ENCODE measurements at regions of chr7 and their contacts with region 1.

Region 1: GRCh38 chr7:149261829-149262617 is at the start of gene ZNF783:
- DNase-seq: peak; percentile 71 to 84
- ATAC-seq: peak; percentile 92 to 94
- H3K4me3 ChIP-seq: peak within 1 kb of the TSS; percentile 59 to 83 (median 62)
- H3K27ac ChIP-seq: peak within 1 kb of the TSS; percentile 76 to 92 (median 85)
- H3K4me1 ChIP-seq: peaks cover 12 to 18% of the 10 kb centered on the region in 2 donors
- H3K27me3 ChIP-seq: no peaks in the 10 kb centered on the region
- CTCF ChIP-seq: peak; percentile 73 to 96 (median 94)
- POLR2A ChIP-seq: peak; percentile 64 to 66
- total RNA-seq, gene ZNF783: 3.4 to 7.1 (median 5.5) TPM

Region 2: DNA sequence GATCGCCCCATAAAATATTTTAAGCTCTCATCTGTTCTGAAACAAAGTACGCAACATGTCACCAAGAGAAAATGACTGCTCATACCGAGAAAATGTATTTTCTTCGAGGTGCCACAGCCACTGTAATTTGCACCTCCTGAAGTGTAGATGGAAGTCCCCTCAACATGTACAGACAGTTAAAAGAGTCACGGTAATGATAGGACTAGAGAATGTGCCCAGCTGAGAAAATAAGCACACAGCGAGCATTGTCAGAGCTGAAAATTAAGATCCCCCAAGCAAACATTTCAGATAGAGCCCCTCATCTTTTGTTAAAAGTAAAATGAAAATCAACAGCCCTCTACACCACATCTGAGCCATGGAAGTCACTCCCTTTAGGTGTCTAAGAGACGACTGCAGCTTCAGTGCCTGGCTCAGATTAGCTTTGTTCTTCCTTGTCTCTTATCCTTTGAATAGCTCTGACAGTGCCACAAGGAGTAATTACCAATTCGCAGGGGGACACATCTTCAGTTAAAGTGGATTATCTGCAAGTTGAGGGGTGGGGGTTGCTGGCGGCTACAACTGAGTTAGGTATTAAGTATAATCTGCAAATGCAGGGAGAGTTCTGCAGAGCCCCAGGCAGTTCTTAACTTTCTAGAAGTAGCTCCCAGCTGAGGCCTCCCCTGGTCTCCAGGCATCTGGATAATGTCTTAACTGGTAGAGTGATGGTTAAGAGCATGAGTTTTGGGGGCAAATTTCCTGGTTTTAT is 894.1 kb before region 1 on chr7:
- in situ Hi-C with region 1: no loop called
- intact Hi-C with region 1: no loop called
- DNase-seq: no peak
- ATAC-seq: no peak
- H3K4me3 ChIP-seq: no peak overlapping the region
- H3K27ac ChIP-seq: no peak overlapping the region
- H3K4me1 ChIP-seq: no peaks in the 10 kb centered on the region
- H3K27me3 ChIP-seq: no peaks in the 10 kb centered on the region
- CTCF ChIP-seq: no peak
- POLR2A ChIP-seq: no peak

Region 3: DNA sequence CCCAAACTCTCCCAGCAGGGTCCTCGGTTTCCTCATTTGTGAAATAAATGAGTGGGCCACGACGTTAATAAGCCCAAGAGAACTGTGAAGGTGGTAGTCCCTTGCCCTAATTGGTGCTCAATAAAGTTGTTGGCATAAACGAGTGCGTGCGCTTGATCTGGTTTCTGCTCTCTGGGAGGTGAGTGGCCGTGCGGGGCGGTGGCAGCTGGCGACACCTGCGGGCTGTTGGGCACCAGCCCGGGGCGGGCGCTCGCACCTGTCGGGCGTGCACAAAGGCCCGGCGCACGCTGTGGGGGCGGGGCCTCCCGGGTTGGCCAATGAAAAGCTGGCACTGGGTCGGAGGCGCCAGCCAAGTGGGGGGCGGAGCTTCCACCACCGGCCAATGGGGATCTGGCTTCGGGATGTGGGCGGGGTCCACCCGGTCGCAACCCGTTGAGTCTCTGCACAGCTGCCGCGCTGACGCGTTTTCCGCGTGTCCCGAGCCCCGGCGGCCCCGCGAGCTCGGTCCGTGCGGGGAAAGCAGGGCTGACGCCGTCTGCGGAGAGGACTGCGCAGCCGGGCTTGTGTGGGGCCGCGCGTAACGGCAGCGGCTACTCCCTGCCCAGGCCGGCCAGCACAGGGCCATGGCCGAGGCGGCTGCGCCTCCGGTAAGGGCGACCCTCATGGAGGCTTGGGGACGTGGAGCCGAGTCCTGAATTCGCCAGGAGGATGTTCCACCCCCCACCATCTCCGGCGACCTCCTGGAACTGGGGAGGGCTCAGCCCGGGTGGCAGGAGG is 23.0 kb after region 1 on chr7:
- in situ Hi-C with region 1: no loop called
- intact Hi-C with region 1: loop called (anchors 1 kb)
- DNase-seq: peak; percentile 95 to 97
- ATAC-seq: peak; percentile 97
- H3K4me3 ChIP-seq: peak overlapping the region; percentile 68 to 86 (median 78)
- H3K27ac ChIP-seq: peak overlapping the region; percentile 77 to 89 (median 84)
- H3K4me1 ChIP-seq: peaks cover 6 to 11% of the 10 kb centered on the region in 2 donors
- H3K27me3 ChIP-seq: no peaks in the 10 kb centered on the region
- CTCF ChIP-seq: no peak
- POLR2A ChIP-seq: peak; percentile 60 to 65

Region 4: GRCh38 chr7:149422129-149422913 is 160.3 kb after region 1 on chr7:
- in situ Hi-C with region 1: no loop called
- intact Hi-C with region 1: loop called (anchors 5 kb)
- DNase-seq: peak in 1 of 2 donors; percentile 26
- ATAC-seq: peak; percentile 83 to 88
- H3K4me3 ChIP-seq: peak overlapping the region; percentile 49 to 67 (median 54)
- H3K27ac ChIP-seq: no peak overlapping the region
- H3K4me1 ChIP-seq: peaks cover 0 to 8% of the 10 kb centered on the region in 2 donors
- H3K27me3 ChIP-seq: peaks cover 0 to 9% (median 0%) of the 10 kb centered on the region in 3 donors
- CTCF ChIP-seq: peak; percentile 21 to 70 (median 60)
- POLR2A ChIP-seq: no peak

Region 5: GRCh38 chr7:149460493-149461277 is 198.7 kb after region 1 on chr7 and contains the start of gene ZNF777:
- in situ Hi-C with region 1: no loop called
- intact Hi-C with region 1: loop called (anchors 1 kb)
- DNase-seq: peak; percentile 70 to 80
- ATAC-seq: peak; percentile 97 to 98
- H3K4me3 ChIP-seq: peak within 1 kb of the TSS; percentile 60 to 93 (median 74)
- H3K27ac ChIP-seq: peak within 1 kb of the TSS; percentile 50 to 77 (median 72)
- H3K4me1 ChIP-seq: peaks cover 14 to 15% of the 10 kb centered on the region in 2 donors
- H3K27me3 ChIP-seq: no peaks in the 10 kb centered on the region
- CTCF ChIP-seq: peak; percentile 22 to 51 (median 39)
- POLR2A ChIP-seq: no peak
- total RNA-seq, gene ZNF777: 7.6 to 17.6 (median 15.1) TPM